K562 (cell line): ENCODE measurements at regions of chrX and their contacts with region 1.

Region 1: DNA sequence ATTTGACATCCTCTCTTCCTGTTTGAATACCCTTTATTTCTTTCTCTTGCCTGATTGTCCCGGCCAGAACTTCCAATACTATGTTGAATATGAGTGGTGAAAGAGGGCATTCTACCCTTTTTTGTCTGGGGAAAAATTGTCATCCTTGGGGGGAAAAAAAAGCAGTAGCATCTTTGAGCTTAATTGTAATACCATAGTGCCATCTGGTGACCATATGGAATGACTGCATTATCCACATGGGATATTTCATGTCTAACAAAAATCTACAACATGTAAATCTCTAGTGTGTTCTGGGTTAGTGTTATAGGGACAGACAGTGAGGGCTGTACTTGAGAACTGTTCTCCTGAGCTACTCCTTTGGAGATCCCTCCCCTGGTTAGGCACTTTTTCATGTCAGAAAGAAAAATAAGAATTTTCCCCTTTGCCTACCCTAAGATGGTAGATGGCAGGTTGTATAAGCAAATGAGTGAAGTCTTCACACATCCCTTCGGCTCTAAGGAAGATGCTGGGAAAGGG is 26.0 kb downstream of the CAPN6 start:
- DNase-seq: peak in 2 of 4 experiments; percentile 3 to 16
- ATAC-seq: no peak
- H3K4me3 ChIP-seq: no peak overlapping the region
- H3K27ac ChIP-seq: no peak overlapping the region
- H3K4me1 ChIP-seq: no peaks in the 10 kb centered on the region
- H3K27me3 ChIP-seq: no peaks in the 10 kb centered on the region
- CTCF ChIP-seq: peak; percentile 17 to 53 (median 19); a peak in 3 of 6 replicates
- EP300 ChIP-seq: no peak
- POLR2A ChIP-seq: no peak
- RAD21 ChIP-seq: peak; percentile 44 to 68

Region 2: DNA sequence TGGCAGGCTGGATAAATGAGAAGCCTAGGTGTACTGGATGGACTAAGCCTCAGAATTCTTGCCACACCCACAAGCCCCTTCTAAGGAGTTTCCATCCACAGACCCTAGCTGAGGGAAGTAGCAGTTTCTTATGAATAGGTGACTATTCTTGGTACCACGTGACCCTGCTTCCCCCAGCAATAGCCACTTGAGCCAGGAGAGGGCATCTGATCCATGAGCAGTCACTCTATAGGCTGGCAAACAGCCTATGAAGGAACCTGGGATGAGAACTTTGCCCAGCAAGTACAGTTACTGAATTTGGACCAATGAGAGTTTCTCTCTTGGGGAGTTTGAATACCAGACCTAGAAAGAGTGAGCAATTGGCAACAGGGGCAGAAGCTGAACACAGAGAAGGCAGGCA is 801.7 kb before region 1 on chrX:
- CTCF ChIA-PET with region 1: no interaction called
- POLR2A ChIA-PET with region 1: no interaction called
- in situ Hi-C with region 1: loop called (anchors 25 kb)
- intact Hi-C with region 1: no loop called
- DNase-seq: peak; percentile 35 to 53 (median 46)
- ATAC-seq: peak; percentile 95
- H3K4me3 ChIP-seq: no peak overlapping the region
- H3K27ac ChIP-seq: no peak overlapping the region
- H3K4me1 ChIP-seq: no peaks in the 10 kb centered on the region
- H3K27me3 ChIP-seq: peaks cover 21 to 25% of the 10 kb centered on the region in 2 experiments; a peak in 3 of 5 replicates
- CTCF ChIP-seq: peak; percentile 43 to 54 (median 44); a peak in 5 of 6 replicates
- EP300 ChIP-seq: no peak
- POLR2A ChIP-seq: no peak
- RAD21 ChIP-seq: peak in 1 of 2 experiments; percentile 22; a peak in 1 of 4 replicates

Region 3: GRCh38 chrX:110450050-110450449 is 794.2 kb before region 1 on chrX:
- CTCF ChIA-PET with region 1: no interaction called
- POLR2A ChIA-PET with region 1: no interaction called
- in situ Hi-C with region 1: loop called (anchors 25 kb)
- intact Hi-C with region 1: loop called (anchors 10 kb)
- DNase-seq: peak; percentile 64 to 74 (median 71)
- ATAC-seq: peak; percentile 99
- H3K4me3 ChIP-seq: no peak overlapping the region
- H3K27ac ChIP-seq: no peak overlapping the region
- H3K4me1 ChIP-seq: no peaks in the 10 kb centered on the region
- H3K27me3 ChIP-seq: peaks cover 5 to 24% of the 10 kb centered on the region in 2 experiments; a peak in 3 of 5 replicates
- CTCF ChIP-seq: peak; percentile 75 to 78 (median 77)
- EP300 ChIP-seq: no peak
- POLR2A ChIP-seq: no peak
- RAD21 ChIP-seq: peak; percentile 56 to 78

Region 4: DNA sequence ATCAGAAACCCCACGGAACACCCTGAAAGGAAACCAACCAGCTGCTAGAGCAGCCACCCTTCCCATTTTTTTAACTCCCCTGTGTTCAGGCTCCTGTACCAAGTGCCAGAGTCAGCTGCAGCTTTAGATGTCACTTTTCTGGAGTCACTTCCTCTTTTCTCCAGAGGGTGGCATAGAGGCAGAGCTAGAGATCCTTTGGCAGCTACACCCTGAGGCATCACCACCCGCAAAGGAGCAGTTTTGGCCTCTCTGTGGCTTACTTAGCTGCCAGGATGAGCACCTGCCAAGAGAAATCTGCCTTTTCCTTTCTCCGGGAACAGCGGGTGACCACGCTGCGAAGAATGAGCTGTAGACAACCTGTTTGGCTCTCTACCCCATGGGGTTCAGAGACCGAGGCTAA is 390.7 kb before region 1 on chrX:
- CTCF ChIA-PET with region 1: no interaction called
- POLR2A ChIA-PET with region 1: no interaction called
- in situ Hi-C with region 1: loop called (anchors 25 kb)
- intact Hi-C with region 1: no loop called
- DNase-seq: peak in 1 of 4 experiments; percentile 6
- ATAC-seq: 0 out of 3 replicates have a peak, but pooled peaks have one; percentile 40
- H3K4me3 ChIP-seq: no peak overlapping the region
- H3K27ac ChIP-seq: no peak overlapping the region
- H3K4me1 ChIP-seq: no peaks in the 10 kb centered on the region; a peak in 1 of 5 replicates
- H3K27me3 ChIP-seq: no peaks in the 10 kb centered on the region
- CTCF ChIP-seq: peak in 2 of 3 experiments; percentile 8 to 15; a peak in 1 of 6 replicates
- EP300 ChIP-seq: no peak
- POLR2A ChIP-seq: no peak
- RAD21 ChIP-seq: no peak

Region 5: GRCh38 chrX:111098874-111099273 is 145.4 kb before region 1 on chrX:
- CTCF ChIA-PET with region 1: no interaction called
- POLR2A ChIA-PET with region 1: no interaction called
- in situ Hi-C with region 1: no loop called
- intact Hi-C with region 1: loop called (anchors 10 kb)
- DNase-seq: peak; percentile 55 to 69 (median 64)
- ATAC-seq: peak; percentile 92
- H3K4me3 ChIP-seq: no peak overlapping the region
- H3K27ac ChIP-seq: no peak overlapping the region
- H3K4me1 ChIP-seq: peaks cover 0 to 6% of the 10 kb centered on the region in 2 experiments; a peak in 1 of 5 replicates
- H3K27me3 ChIP-seq: no peaks in the 10 kb centered on the region
- CTCF ChIP-seq: peak; percentile 59 to 77 (median 68)
- EP300 ChIP-seq: no peak
- POLR2A ChIP-seq: no peak
- RAD21 ChIP-seq: peak in 1 of 2 experiments; percentile 29; a peak in 1 of 4 replicates

Region 6: DNA sequence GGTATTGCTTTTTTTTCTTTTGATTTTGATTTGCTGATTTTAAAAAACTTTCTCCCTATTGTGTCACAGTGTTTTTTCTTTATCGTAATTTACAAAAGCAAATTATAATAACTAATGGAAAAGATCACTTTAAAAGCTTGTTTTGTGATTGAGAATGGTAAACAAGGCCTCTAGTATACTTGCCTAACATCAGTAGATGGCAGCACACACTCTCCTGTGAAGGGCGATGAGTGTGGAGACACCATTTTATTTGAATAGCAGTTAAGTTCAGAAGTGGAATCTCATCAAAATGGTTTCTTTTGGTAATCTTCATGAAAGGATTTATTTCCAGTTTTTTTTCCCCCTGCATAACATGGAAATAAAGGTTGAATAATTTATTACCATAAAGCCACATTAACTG is 76.0 kb before region 1 on chrX:
- CTCF ChIA-PET with region 1: interaction called, 3 read pairs
- POLR2A ChIA-PET with region 1: no interaction called
- in situ Hi-C with region 1: no loop called
- intact Hi-C with region 1: loop called (anchors 5 kb)
- DNase-seq: peak in 2 of 4 experiments; percentile 3 to 4
- ATAC-seq: peak; percentile 52; the same call in 1 of the 3 replicates
- H3K4me3 ChIP-seq: no peak overlapping the region
- H3K27ac ChIP-seq: no peak overlapping the region
- H3K4me1 ChIP-seq: no peaks in the 10 kb centered on the region
- H3K27me3 ChIP-seq: no peaks in the 10 kb centered on the region
- CTCF ChIP-seq: peak in 2 of 3 experiments; percentile 5 to 34; a peak in 3 of 6 replicates
- EP300 ChIP-seq: no peak
- POLR2A ChIP-seq: no peak
- RAD21 ChIP-seq: peak in 1 of 2 experiments; percentile 20; a peak in 2 of 4 replicates

Region 7: DNA sequence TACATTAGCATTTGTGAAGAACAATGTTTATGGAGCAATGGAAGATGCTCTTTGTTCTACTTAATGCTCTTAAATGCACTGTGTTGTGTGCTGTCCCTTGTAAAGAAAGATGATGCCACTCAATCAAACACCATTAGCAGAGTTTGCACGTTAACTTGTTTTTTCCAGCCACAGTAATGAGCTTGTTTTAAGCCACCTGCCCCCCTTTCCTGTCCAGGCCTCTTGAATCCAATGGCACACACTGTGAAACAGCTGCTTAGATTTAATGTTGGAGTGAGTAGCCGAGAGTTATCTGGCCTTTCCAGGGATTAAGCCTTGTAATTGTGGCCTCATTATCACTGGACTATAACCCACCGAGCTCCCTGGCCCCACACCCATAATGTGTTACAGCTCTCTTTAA is 62.3 kb before region 1 on chrX:
- CTCF ChIA-PET with region 1: no interaction called
- POLR2A ChIA-PET with region 1: no interaction called
- in situ Hi-C with region 1: no loop called
- intact Hi-C with region 1: no loop called
- DNase-seq: no peak
- ATAC-seq: no peak
- H3K4me3 ChIP-seq: no peak overlapping the region
- H3K27ac ChIP-seq: no peak overlapping the region
- H3K4me1 ChIP-seq: no peaks in the 10 kb centered on the region
- H3K27me3 ChIP-seq: no peaks in the 10 kb centered on the region
- CTCF ChIP-seq: no peak
- EP300 ChIP-seq: no peak
- POLR2A ChIP-seq: no peak
- RAD21 ChIP-seq: no peak

Region 8: GRCh38 chrX:111447298-111447697 is 203.0 kb after region 1 on chrX:
- CTCF ChIA-PET with region 1: no interaction called
- POLR2A ChIA-PET with region 1: no interaction called
- in situ Hi-C with region 1: no loop called
- intact Hi-C with region 1: no loop called
- DNase-seq: peak; percentile 10 to 51 (median 16)
- ATAC-seq: peak; percentile 84
- H3K4me3 ChIP-seq: no peak overlapping the region
- H3K27ac ChIP-seq: no peak overlapping the region
- H3K4me1 ChIP-seq: no peaks in the 10 kb centered on the region
- H3K27me3 ChIP-seq: no peaks in the 10 kb centered on the region
- CTCF ChIP-seq: peak; percentile 51 to 56 (median 53); a peak in 5 of 6 replicates
- EP300 ChIP-seq: no peak
- POLR2A ChIP-seq: no peak
- RAD21 ChIP-seq: peak in 1 of 2 experiments; percentile 25; a peak in 1 of 4 replicates